Panc1 (cell line): ENCODE measurements at regions of chr15 and their contacts with region 1.

Region 1: DNA sequence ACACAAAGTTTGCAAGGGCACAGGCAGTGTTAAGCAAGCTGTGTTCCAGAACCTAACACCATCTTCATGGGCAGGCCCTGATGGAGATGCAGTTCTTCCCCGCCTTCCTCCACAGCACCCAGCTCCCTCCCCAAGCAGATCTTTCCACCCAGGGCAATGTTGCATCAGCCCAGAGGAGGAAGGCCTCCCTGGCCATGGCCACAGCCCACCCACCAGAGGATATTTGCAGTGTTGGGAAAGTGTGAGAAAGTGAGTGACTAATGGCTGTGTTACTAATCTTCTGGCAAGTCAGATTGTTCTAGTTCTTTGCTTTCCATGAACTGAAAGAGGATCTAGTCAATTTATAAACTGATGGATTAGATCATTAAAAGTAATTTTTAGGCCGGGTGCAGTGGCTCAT is 42.0 kb upstream of the ATP10A start:
- DNase-seq: no peak
- ATAC-seq: no peak
- H3K4me3 ChIP-seq: no peak overlapping the region
- H3K27ac ChIP-seq: no peak overlapping the region
- H3K4me1 ChIP-seq: no peaks in the 10 kb centered on the region; the same call in 1 of the 2 replicates
- H3K27me3 ChIP-seq: no peaks in the 10 kb centered on the region
- CTCF ChIP-seq: no peak

Region 2: DNA sequence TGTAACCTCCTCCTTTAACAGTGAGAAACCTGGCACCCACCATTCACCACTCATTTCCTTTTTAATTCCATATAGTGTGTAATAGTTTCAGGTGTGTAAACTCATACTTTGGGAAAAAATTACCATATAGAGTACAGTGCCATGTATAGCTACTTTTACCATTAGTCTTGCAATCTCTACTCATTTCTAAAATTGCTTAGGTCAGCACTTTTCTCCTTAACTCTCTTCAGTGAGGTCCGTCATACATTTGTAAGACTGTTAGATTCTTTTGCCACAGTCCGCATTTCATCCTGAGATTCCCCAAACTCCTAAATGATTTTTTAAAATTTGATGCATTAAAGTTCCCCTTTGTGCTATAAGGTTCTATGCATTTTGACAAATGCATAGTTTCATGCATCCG is 196.3 kb after region 1 on chr15:
- CTCF ChIA-PET with region 1: no interaction called
- POLR2A ChIA-PET with region 1: interaction called, 10 read pairs
- in situ Hi-C with region 1: no loop called
- intact Hi-C with region 1: no loop called
- DNase-seq: no peak
- ATAC-seq: no peak
- H3K4me3 ChIP-seq: no peak overlapping the region
- H3K27ac ChIP-seq: no peak overlapping the region
- H3K4me1 ChIP-seq: no peaks in the 10 kb centered on the region
- H3K27me3 ChIP-seq: no peaks in the 10 kb centered on the region
- CTCF ChIP-seq: no peak